HepG2 (cell line): ENCODE measurements at regions of chr22 and their contacts with region 1.

Region 1: GRCh38 chr22:19240813-19241592 is 50.5 kb downstream of the CLTCL1 start:
- DNase-seq: no peak
- ATAC-seq: no peak
- H3K4me3 ChIP-seq: no peak overlapping the region
- H3K27ac ChIP-seq: no peak overlapping the region
- H3K4me1 ChIP-seq: no peaks in the 10 kb centered on the region
- H3K27me3 ChIP-seq: no peaks in the 10 kb centered on the region
- CTCF ChIP-seq: no peak
- EP300 ChIP-seq: no peak
- POLR2A ChIP-seq: no peak
- RAD21 ChIP-seq: no peak

Region 2: DNA sequence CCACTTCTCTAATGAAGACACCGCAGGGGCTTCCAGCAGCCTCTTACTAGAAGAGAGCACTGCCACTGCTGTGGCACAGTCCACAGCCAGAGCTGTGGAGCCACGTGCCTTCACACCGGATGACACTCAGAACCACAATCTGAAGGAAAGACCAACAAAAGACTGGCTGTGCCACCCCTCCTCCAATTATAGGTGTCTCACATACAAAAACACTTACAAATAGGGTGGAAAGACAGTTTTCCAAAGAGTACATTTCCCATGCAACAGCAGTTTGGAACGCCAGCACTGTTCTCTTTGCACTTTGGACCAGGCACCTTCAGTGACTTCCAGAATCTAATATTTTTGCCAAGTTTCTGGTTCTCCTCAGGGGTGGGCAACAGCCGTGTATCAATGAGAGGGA is 24.4 kb before region 1 on chr22:
- CTCF ChIA-PET with region 1: no interaction called
- POLR2A ChIA-PET with region 1: no interaction called
- in situ Hi-C with region 1: no loop called
- intact Hi-C with region 1: loop called (anchors 1 kb)
- DNase-seq: peak; percentile 12
- ATAC-seq: no peak; the same call in 2 of the 3 replicates
- H3K4me3 ChIP-seq: no peak overlapping the region
- H3K27ac ChIP-seq: peak overlapping the region; percentile 26
- H3K4me1 ChIP-seq: peaks cover 18% of the 10 kb centered on the region
- H3K27me3 ChIP-seq: no peaks in the 10 kb centered on the region
- CTCF ChIP-seq: no peak
- EP300 ChIP-seq: no peak
- POLR2A ChIP-seq: no peak
- RAD21 ChIP-seq: no peak